Activated T-helper 1 cell treated with anti-CD3 and anti-CD28 coated beads, Interleukin-12 subunit alpha, Interleukin-12 subunit beta, Interleukin-2, Interleukin-4 antibody, amounts not matched to agents 30 ng/mL and 10 ng/mL and 1 ng/mL, durations not matched to agents 14 hours and 24 hours and 36 hours (primary cell): ENCODE measurements at regions of chr1 and their contacts with region 1.

Region 1: DNA sequence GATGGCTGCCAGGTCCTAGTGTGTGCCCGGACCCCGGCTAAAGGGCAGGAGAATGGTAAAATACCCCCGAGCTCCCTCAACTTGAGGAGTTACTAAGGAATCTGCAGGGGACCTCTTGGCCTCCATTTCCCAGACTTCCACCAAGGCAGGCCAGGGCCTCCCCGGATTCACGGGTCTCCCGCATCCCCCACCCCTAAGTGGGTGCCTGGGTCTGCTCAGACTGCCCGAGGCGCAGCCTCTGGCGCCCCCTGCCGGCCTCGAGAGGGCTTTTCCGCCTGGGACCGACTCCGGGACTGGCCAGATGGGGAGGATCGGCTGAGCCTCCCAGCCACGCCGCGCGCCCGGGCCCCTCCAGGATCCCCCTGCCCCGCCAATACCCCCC is 1.7 kb downstream of the PLEKHG5 start:
- DNase-seq: peak; percentile 79
- H3K4me3 Mint-ChIP-seq: peak overlapping the region; percentile 85
- H3K27ac Mint-ChIP-seq: peak overlapping the region; percentile 48
- H3K4me1 Mint-ChIP-seq: peaks cover 16% of the 10 kb centered on the region
- H3K27me3 Mint-ChIP-seq: peaks cover 25% of the 10 kb centered on the region

Region 2: DNA sequence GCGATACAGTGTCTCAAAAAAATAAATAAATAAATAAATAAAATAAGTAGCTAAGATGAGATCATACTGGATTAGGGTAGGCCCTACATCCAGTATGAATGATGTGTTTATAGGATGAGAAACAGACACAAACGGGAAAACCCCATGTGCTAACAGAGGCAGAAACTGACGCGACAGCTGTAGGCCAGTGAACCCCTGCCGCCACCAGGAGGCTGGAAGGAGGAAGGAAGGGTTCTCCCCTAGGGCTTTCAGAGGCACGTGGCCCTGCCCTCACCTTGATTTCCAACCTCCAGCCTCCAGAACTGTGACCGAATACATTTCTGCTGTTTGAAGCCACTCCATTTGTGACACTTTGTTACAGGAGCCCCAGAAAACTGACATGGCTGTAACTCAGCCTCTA is 348.2 kb before region 1 on chr1:
- intact Hi-C with region 1: no loop called
- DNase-seq: no peak
- H3K4me3 Mint-ChIP-seq: no peak overlapping the region
- H3K27ac Mint-ChIP-seq: no peak overlapping the region
- H3K4me1 Mint-ChIP-seq: peaks cover 4% of the 10 kb centered on the region
- H3K27me3 Mint-ChIP-seq: peaks cover 1% of the 10 kb centered on the region

Region 3: DNA sequence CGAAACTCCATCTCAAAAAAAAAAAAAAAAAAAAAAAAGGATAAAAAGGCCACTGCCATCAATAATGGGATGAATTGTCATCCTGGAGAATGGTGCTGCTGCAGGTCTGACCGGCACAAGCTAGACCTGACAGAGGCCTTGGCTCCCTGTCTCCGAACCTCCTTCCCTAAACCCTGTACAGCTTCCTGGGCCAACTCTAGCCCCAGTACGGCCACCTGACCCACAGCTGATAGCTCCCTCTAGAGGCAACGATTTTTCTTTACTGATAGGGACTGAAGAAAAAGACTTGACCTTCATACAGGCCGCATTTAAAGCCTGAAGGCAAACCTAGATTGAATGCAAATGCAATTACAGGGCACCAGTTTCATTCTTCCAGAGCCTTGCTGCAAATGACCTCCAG is 33.8 kb after region 1 on chr1:
- intact Hi-C with region 1: loop called (anchors 1 kb)
- DNase-seq: no peak
- H3K4me3 Mint-ChIP-seq: no peak overlapping the region
- H3K27ac Mint-ChIP-seq: no peak overlapping the region
- H3K4me1 Mint-ChIP-seq: no peaks in the 10 kb centered on the region
- H3K27me3 Mint-ChIP-seq: no peaks in the 10 kb centered on the region

Region 4: GRCh38 chr1:6646499-6647148 is 156.8 kb after region 1 on chr1:
- intact Hi-C with region 1: loop called (anchors 1 kb)
- DNase-seq: no peak
- H3K4me3 Mint-ChIP-seq: no peak overlapping the region
- H3K27ac Mint-ChIP-seq: no peak overlapping the region
- H3K4me1 Mint-ChIP-seq: peaks cover 7% of the 10 kb centered on the region
- H3K27me3 Mint-ChIP-seq: no peaks in the 10 kb centered on the region

Region 5: DNA sequence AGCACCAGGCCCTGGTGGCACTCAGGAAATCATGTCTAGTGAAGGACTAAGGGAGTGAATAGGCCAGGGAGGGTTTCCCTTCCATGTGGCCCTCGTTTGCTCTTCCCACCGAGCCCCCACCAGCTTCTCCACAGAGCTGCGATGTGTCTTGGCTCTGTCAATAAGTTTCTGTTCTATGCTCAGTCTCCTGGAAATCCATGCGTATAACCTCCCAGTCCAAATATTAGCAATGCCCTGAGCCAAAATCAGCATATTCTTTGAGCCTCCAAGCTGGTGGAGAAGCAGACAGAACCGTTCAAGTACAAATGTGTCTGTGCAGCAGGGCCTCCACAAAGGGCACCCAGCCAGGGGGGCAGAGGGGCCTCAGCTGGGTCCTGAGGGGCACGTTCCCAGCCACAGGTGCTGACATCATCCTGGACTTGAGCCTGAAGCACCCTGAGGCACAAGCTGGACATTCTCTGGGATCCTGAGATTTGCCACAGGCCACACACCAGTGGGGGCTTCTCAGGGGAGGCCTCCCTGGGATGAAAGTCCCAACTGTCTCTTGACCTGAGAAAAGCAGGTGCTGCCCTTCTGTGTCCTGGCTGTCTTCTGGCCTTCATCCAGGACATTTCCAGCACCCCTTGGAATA is 930.8 kb after region 1 on chr1:
- intact Hi-C with region 1: no loop called
- DNase-seq: no peak
- H3K4me3 Mint-ChIP-seq: no peak overlapping the region
- H3K27ac Mint-ChIP-seq: no peak overlapping the region
- H3K4me1 Mint-ChIP-seq: no peaks in the 10 kb centered on the region
- H3K27me3 Mint-ChIP-seq: no peaks in the 10 kb centered on the region